Activated B cell treated with CpG ODN at 0.5 μM for 24 hours (primary cell): ENCODE measurements at regions of chr19 and their contacts with region 1.

Region 1: DNA sequence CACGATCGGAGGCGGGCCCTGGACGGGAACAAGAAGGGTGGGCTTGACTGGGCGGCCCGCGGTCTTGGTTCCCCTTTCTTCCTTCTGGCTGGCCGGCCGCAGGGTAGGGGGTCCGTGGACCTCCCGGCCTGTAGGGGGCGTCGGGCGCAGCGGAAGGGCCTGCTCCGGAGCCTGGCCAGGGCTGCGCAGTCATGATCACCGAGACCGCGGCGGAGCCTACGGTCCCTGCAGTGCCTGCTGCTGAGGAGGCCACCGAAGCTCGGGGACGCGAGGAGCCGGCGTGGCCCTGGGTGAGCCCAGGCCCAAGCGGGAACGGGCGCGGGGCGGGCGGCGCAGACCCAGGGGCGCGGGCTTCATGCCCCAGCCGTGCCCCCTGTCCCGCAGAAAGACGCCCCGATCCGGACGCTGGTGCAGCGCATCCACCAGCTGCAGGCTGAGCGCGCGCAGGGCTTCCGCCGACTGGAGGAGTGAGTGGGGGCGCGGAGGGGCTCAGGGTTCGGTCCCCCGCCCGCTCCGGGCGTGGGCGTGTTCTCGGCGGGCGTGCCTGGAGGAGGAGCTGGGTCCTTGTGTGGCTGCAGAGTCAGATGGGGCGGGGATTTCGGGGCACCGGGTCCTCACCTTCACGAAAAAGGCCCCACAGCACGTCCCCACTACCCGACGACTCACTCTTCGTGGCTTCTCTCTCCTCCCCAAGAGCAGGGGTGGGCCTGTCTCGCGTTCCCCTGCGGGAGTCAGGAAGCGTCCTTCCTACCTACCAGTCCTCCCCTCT is at the start of gene REX1BD:
- DNase-seq: peak; percentile 79
- ATAC-seq: peak; percentile 79
- H3K4me3 Mint-ChIP-seq: peak within 1 kb of the TSS; percentile 87
- H3K27ac Mint-ChIP-seq: peak within 1 kb of the TSS; percentile 83
- H3K4me1 Mint-ChIP-seq: peaks cover 41% of the 10 kb centered on the region
- H3K27me3 Mint-ChIP-seq: peaks cover 2% of the 10 kb centered on the region
- CTCF ChIP-seq: peak; percentile 61
- total RNA-seq, gene REX1BD: 83.7 and 85.9 TPM in 2 replicates

Region 2: DNA sequence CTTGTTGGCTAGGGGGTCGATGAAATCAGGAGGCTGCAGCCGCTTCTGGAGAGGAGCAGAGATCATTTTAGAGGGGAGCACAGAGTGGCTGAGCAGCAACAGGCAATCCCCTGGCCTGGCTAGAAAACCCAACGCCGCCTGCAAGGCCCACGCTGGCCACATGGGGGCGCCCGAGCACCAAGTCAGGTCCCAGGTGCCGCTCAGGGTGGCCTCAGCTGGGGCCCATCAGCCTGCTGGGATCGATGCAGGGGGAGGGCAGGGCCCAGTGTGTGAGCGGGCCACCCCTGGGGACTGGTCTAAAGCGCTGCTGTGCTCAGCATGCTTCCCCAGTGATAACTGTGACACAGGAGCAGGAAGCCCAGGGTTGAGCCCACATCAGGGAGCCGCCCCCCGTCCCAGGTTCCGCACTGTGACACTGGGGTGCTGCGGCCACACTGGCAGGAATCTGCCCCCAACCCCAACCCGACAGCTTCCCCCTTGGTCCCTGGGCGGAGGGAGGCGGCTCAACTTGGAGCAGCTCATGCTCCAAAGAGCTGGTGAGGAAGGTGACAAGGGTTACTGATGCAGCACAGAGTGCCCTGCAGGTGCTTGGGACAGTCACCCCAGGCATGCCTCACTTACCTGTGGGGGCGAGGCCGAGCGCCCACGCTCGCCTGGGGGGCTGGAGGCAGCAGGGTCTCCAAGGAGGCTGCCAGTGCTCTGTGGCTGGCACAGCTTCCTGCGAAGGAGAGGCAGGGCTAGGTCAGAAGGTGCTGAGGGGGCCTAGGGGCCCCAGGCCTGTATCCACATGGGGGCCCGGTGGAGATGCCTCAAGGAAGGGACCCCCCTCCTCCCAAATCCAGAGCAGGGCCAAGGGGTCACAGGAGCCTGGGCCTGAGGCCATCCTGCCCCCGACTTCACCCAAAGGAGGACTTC is 137.6 kb before region 1 on chr19:
- CTCF ChIA-PET with region 1: interaction called, 5 read pairs
- POLR2A ChIA-PET with region 1: interaction called, 4 read pairs
- intact Hi-C with region 1: loop called (anchors 5 kb)
- DNase-seq: peak; percentile 90
- ATAC-seq: peak; percentile 97
- H3K4me3 Mint-ChIP-seq: no peak overlapping the region
- H3K27ac Mint-ChIP-seq: no peak overlapping the region
- H3K4me1 Mint-ChIP-seq: peaks cover 5% of the 10 kb centered on the region
- H3K27me3 Mint-ChIP-seq: no peaks in the 10 kb centered on the region
- CTCF ChIP-seq: peak; percentile 45

Region 3: GRCh38 chr19:18542936-18543815 is 45.6 kb before region 1 on chr19 and contains the start of gene FKBP8:
- CTCF ChIA-PET with region 1: interaction called, 3 read pairs
- POLR2A ChIA-PET with region 1: interaction called, 6 read pairs
- intact Hi-C with region 1: loop called (anchors 5 kb)
- DNase-seq: peak; percentile 92
- ATAC-seq: peak; percentile 99
- H3K4me3 Mint-ChIP-seq: peak within 1 kb of the TSS; percentile 90
- H3K27ac Mint-ChIP-seq: peak within 1 kb of the TSS; percentile 90
- H3K4me1 Mint-ChIP-seq: peaks cover 23% of the 10 kb centered on the region
- H3K27me3 Mint-ChIP-seq: no peaks in the 10 kb centered on the region
- CTCF ChIP-seq: no peak
- total RNA-seq, gene FKBP8: 133 and 140 TPM in 2 replicates

Region 4: GRCh38 chr19:18571564-18572300 is 17.1 kb before region 1 on chr19 and contains the start of gene UBA52:
- CTCF ChIA-PET with region 1: interaction called, 17 read pairs
- POLR2A ChIA-PET with region 1: interaction called, 55 read pairs
- intact Hi-C with region 1: loop called (anchors 1 kb)
- DNase-seq: peak; percentile 100
- ATAC-seq: peak; percentile 93
- H3K4me3 Mint-ChIP-seq: peak within 1 kb of the TSS; percentile 94
- H3K27ac Mint-ChIP-seq: peak within 1 kb of the TSS; percentile 93
- H3K4me1 Mint-ChIP-seq: peaks cover 30% of the 10 kb centered on the region
- H3K27me3 Mint-ChIP-seq: no peaks in the 10 kb centered on the region
- CTCF ChIP-seq: no peak
- total RNA-seq, gene UBA52: 1,962 and 2,164 TPM in 2 replicates

Region 5: DNA sequence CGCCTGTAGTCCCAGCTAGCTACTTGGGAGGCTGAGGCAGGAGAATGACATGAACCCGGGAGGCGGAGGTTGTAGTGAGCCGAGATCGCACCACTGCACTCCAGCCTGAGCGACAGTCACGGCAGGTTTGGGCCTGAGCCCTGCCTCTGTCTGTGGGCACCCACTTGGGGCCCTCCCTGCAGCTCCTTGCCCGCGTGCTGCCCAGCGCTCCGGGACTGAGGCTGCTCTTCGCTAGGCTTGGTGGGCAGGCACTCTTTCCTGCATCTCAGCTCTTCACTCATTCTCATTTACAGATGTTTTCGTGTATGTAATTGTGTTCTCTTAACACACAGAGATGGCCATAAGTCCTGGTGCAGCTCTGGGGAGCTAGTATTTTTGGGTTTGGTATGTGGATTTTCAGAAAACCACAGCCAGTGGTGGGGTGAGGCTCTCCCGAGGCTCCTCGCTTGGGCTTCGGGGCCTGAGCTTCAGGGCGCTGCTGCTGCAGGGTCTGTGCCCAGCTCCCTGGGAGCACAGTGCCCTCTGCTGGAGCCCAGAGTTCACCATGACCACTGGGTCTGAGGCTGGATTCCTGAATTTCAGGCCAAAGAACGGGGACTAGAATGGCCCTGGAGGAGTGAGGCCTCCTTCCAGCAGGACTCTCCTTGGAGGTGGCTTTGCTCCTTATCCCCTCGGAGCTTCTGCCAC is 258.2 kb after region 1 on chr19:
- CTCF ChIA-PET with region 1: interaction called, 38 read pairs
- POLR2A ChIA-PET with region 1: interaction called, 4 read pairs
- intact Hi-C with region 1: no loop called
- DNase-seq: peak; percentile 56
- ATAC-seq: peak; percentile 77
- H3K4me3 Mint-ChIP-seq: no peak overlapping the region
- H3K27ac Mint-ChIP-seq: peak overlapping the region; percentile 46
- H3K4me1 Mint-ChIP-seq: peaks cover 75% of the 10 kb centered on the region
- H3K27me3 Mint-ChIP-seq: no peaks in the 10 kb centered on the region
- CTCF ChIP-seq: peak; percentile 35